ENCODE measurements at regions of chr2 and their contacts with region 1.

Region 1: DNA sequence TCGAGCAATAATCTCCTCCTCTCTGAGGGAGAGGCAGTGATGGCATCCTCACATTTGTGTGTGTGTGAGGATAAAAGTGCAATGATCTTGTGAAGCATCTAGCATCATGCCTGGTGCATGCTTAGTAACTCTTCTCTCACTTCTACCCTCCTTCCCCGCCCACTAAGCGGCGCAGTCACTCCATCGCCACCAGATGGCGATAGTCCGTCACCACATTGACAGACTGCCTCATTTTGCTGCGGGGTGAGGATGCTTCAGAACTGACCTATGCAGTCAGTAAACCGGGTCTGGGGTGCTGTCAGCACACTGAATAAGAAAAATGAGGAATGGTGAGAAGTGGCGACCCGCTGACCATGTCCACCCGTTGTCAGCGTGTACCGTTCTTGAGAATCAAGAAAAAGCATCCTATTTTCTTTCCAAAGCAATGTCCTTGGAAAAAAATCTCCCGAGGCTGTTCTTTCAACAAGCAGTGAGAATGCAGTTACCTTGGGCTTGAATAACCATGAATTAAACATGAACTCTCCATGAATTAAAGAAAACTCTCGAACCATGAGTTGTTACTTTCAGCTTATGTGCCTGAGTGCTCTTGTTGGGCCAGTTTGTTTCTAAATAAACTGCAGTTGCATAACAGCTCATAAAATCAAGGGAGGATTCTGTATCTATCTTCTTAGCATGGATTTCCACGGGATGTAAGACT is 37.3 kb upstream of the TMEM177 start:
- DNase-seq: peak; percentile 78
- H3K4me3 ChIP-seq: no peak overlapping the region
- H3K27ac ChIP-seq: no peak overlapping the region
- H3K4me1 ChIP-seq: peaks cover 25% of the 10 kb centered on the region
- H3K27me3 ChIP-seq: peaks cover 2 to 5% of the 10 kb centered on the region in 2 experiments
- CTCF ChIP-seq: peak; percentile 92 to 95
- POLR2A ChIP-seq: no peak

Region 2: GRCh38 chr2:119659601-119660342 is 18.1 kb after region 1 on chr2:
- CTCF ChIA-PET with region 1: interaction called, 257 read pairs
- POLR2A ChIA-PET with region 1: interaction called, 5 read pairs
- dilution Hi-C with region 1: no loop called
- intact Hi-C with region 1: loop called (anchors 1 kb)
- DNase-seq: peak; percentile 52
- H3K4me3 ChIP-seq: no peak overlapping the region
- H3K27ac ChIP-seq: no peak overlapping the region
- H3K4me1 ChIP-seq: peaks cover 15% of the 10 kb centered on the region
- H3K27me3 ChIP-seq: peaks cover 4% of the 10 kb centered on the region in 2 experiments
- CTCF ChIP-seq: peak; percentile 83 to 87
- POLR2A ChIP-seq: no peak

Region 3: GRCh38 chr2:119671016-119671415 is 29.3 kb after region 1 on chr2:
- CTCF ChIA-PET with region 1: interaction called, 11 read pairs
- POLR2A ChIA-PET with region 1: no interaction called
- dilution Hi-C with region 1: no loop called
- intact Hi-C with region 1: loop called (anchors 5 kb)
- DNase-seq: no peak
- H3K4me3 ChIP-seq: no peak overlapping the region
- H3K27ac ChIP-seq: no peak overlapping the region
- H3K4me1 ChIP-seq: peaks cover 2% of the 10 kb centered on the region
- H3K27me3 ChIP-seq: peaks cover 0 to 4% of the 10 kb centered on the region in 2 experiments
- CTCF ChIP-seq: no peak
- POLR2A ChIP-seq: no peak

Region 4: GRCh38 chr2:119678998-119679710 is 37.4 kb after region 1 on chr2 and contains the start of gene TMEM177:
- CTCF ChIA-PET with region 1: interaction called, 6 read pairs
- POLR2A ChIA-PET with region 1: no interaction called
- dilution Hi-C with region 1: no loop called
- intact Hi-C with region 1: loop called (anchors 5 kb)
- DNase-seq: peak; percentile 83
- H3K4me3 ChIP-seq: peak within 1 kb of the TSS; percentile 82 to 98 (median 91)
- H3K27ac ChIP-seq: peak within 1 kb of the TSS; percentile 53
- H3K4me1 ChIP-seq: peaks cover 6% of the 10 kb centered on the region
- H3K27me3 ChIP-seq: peaks cover 0 to 7% of the 10 kb centered on the region in 2 experiments
- CTCF ChIP-seq: no peak
- POLR2A ChIP-seq: peak; percentile 85
- total RNA-seq, gene TMEM177: 9.8 and 11.5 TPM in 2 replicates

Region 5: GRCh38 chr2:119826370-119826961 is 184.8 kb after region 1 on chr2:
- CTCF ChIA-PET with region 1: interaction called, 10 read pairs
- POLR2A ChIA-PET with region 1: no interaction called
- dilution Hi-C with region 1: no loop called
- intact Hi-C with region 1: loop called (anchors 2 kb)
- DNase-seq: peak; percentile 49
- H3K4me3 ChIP-seq: no peak overlapping the region
- H3K27ac ChIP-seq: no peak overlapping the region
- H3K4me1 ChIP-seq: peaks cover 9% of the 10 kb centered on the region
- H3K27me3 ChIP-seq: no peaks in the 10 kb centered on the region
- CTCF ChIP-seq: peak; percentile 68 to 71
- POLR2A ChIP-seq: no peak